ENCODE measurements at regions of chr4 and their contacts with region 1.

Region 1: DNA sequence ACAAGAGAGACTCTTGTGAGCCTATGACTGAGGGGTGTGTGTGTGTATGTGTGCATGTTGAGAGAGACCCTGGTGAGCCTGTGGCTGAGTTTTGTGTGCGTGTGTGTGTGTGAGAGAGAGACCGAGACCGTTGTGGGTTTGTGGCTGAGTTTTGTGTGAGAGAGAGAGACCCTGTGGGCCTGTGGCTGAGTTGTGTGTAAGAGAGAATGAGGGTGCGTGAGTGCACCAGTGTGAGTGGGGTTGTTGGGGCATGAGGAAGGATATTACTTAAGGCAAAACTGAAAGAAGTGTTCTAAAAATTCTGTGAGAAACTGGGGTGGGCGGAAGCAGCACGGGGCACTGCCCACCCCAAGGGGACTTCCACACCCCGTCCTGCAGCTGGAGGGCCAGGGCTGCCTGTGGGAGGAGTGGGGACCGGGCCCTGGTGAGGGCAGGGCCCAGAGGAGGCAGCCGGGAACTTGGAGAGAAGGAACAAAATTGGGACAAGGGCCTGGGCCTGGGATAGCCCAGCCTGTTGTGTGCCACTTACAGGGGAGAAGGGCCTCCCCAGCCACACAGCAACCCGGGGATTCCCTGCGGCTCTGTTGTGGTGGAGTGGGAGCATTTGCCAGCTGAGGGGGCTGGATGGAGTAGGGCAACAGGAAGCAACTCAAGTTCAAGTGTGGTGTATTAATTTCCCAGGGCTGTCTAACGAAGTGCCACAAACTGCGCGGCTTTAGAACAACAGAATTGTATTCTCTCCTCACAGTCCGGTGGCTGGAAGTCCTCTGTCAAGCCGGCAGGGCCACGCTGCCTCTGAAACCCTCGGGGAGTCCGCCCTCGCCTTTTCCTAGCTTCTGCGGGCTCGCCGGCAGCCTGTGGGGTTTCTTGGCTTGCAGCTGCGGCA is 22.1 kb downstream of the TMEM131L start:
- DNase-seq: peak; percentile 88
- ATAC-seq: peak; percentile 57
- H3K4me3 Mint-ChIP-seq: peak overlapping the region; percentile 57
- H3K27ac Mint-ChIP-seq: peak overlapping the region; percentile 92
- H3K4me1 Mint-ChIP-seq: peaks cover 78% of the 10 kb centered on the region
- H3K27me3 Mint-ChIP-seq: no peaks in the 10 kb centered on the region

Region 2: GRCh38 chr4:152176627-152177214 is 1311.5 kb before region 1 on chr4:
- CTCF ChIA-PET with region 1: no interaction called
- POLR2A ChIA-PET with region 1: no interaction called
- intact Hi-C with region 1: no loop called
- DNase-seq: no peak
- ATAC-seq: no peak
- H3K4me3 Mint-ChIP-seq: no peak overlapping the region
- H3K27ac Mint-ChIP-seq: no peak overlapping the region
- H3K4me1 Mint-ChIP-seq: peaks cover 8% of the 10 kb centered on the region
- H3K27me3 Mint-ChIP-seq: no peaks in the 10 kb centered on the region

Region 3: GRCh38 chr4:152628128-152628527 is 860.1 kb before region 1 on chr4:
- CTCF ChIA-PET with region 1: no interaction called
- POLR2A ChIA-PET with region 1: no interaction called
- intact Hi-C with region 1: no loop called
- DNase-seq: no peak
- ATAC-seq: no peak
- H3K4me3 Mint-ChIP-seq: no peak overlapping the region
- H3K27ac Mint-ChIP-seq: no peak overlapping the region
- H3K4me1 Mint-ChIP-seq: no peaks in the 10 kb centered on the region
- H3K27me3 Mint-ChIP-seq: no peaks in the 10 kb centered on the region

Region 4: GRCh38 chr4:153344131-153345010 is 143.9 kb before region 1 on chr4 and contains the start of gene MND1:
- CTCF ChIA-PET with region 1: interaction called, 5 read pairs
- POLR2A ChIA-PET with region 1: no interaction called
- intact Hi-C with region 1: loop called in 1 of 2 experiments (anchors 2 kb)
- DNase-seq: peak; percentile 96
- ATAC-seq: peak; percentile 93
- H3K4me3 Mint-ChIP-seq: peak within 1 kb of the TSS; percentile 85
- H3K27ac Mint-ChIP-seq: peak within 1 kb of the TSS; percentile 90
- H3K4me1 Mint-ChIP-seq: peaks cover 36% of the 10 kb centered on the region
- H3K27me3 Mint-ChIP-seq: peaks cover 7% of the 10 kb centered on the region
- total RNA-seq, gene MND1: 34.1 to 41.9 TPM

Region 5: DNA sequence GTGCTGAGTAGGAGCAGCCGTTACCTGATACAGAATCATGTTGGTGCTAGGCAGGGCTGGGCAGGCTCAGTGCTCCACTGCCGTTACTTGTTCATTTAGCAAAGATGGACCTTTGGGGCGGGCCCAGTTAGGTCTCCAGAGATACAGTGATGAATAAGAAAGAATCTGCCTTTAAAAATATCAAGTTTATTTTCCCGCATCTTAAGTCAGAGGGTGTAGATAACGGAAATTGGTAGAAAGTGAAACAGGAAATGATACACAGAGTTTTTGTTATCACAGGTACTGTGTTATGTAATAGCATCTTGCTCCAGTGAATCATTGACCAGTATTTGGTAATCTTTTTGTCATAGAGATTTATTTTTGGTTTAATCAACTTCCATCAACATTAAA is 16.6 kb before region 1 on chr4:
- CTCF ChIA-PET with region 1: interaction called, 10 read pairs
- POLR2A ChIA-PET with region 1: interaction called, 5 read pairs
- intact Hi-C with region 1: loop called (anchors 1 kb)
- DNase-seq: peak; percentile 71
- ATAC-seq: peak; percentile 61
- H3K4me3 Mint-ChIP-seq: peak overlapping the region; percentile 94
- H3K27ac Mint-ChIP-seq: peak overlapping the region; percentile 90
- H3K4me1 Mint-ChIP-seq: peaks cover 66% of the 10 kb centered on the region
- H3K27me3 Mint-ChIP-seq: no peaks in the 10 kb centered on the region

Region 6: GRCh38 chr4:153521999-153522801 is 34.0 kb after region 1 on chr4:
- CTCF ChIA-PET with region 1: interaction called, 7 read pairs
- POLR2A ChIA-PET with region 1: interaction called, 7 read pairs
- intact Hi-C with region 1: loop called (anchors 1 to 2 kb)
- DNase-seq: peak; percentile 83
- ATAC-seq: peak; percentile 79
- H3K4me3 Mint-ChIP-seq: peak overlapping the region; percentile 61
- H3K27ac Mint-ChIP-seq: peak overlapping the region; percentile 98
- H3K4me1 Mint-ChIP-seq: peaks cover 95% of the 10 kb centered on the region
- H3K27me3 Mint-ChIP-seq: no peaks in the 10 kb centered on the region

Region 7: DNA sequence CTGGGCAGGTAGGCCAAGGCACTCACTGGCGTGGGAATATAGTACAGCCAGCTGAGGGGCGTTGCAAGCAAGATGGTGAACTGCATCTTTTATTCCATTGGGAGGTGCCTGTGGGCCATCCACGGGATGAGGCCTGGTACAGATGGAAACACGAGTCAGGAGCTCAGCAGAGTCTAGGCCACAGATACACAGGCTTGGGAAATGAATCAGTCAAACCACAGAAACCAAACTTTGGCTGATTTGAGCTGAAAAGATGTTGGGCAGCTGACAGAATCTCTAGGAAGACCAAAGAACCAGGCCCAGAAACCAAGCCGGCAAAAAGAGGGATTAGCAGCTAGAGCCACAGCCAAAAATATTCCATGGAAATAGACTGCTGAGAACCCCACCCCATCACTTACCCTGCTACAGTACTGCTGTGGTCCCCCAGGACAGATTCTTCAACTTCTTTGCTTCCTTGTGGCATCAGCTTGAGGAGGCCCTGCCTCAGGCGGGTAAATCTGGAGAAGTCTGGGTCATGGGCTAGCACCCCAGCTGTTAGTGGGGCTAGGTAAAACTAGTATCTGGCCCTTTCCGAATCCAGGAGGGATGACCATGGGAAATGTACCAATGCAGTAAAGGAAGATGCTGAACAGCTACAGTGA is 53.3 kb after region 1 on chr4:
- CTCF ChIA-PET with region 1: no interaction called
- POLR2A ChIA-PET with region 1: no interaction called
- intact Hi-C with region 1: loop called in 1 of 2 experiments (anchors 1 kb)
- DNase-seq: peak; percentile 62
- ATAC-seq: peak; percentile 89
- H3K4me3 Mint-ChIP-seq: no peak overlapping the region
- H3K27ac Mint-ChIP-seq: peak overlapping the region; percentile 44
- H3K4me1 Mint-ChIP-seq: peaks cover 79% of the 10 kb centered on the region
- H3K27me3 Mint-ChIP-seq: no peaks in the 10 kb centered on the region

Measured in activated CD4-positive, alpha-beta T cell treated with anti-CD3 and anti-CD28 coated beads for 36 hours (primary cell).